H1 (cell line): ENCODE measurements at regions of chr2 and their contacts with region 1.

Region 1: GRCh38 chr2:130372055-130372832 is 16.4 kb downstream of the PTPN18 start:
- DNase-seq: peak in 1 of 2 experiments; percentile 98
- H3K4me3 ChIP-seq: peak overlapping the region; percentile 64 to 88 (median 80)
- H3K27ac ChIP-seq: no peak overlapping the region
- H3K4me1 ChIP-seq: peaks cover 0 to 13% (median 5%) of the 10 kb centered on the region in 4 experiments; a peak in 5 of 7 replicates
- H3K27me3 ChIP-seq: peaks cover 0 to 2% (median 0%) of the 10 kb centered on the region in 4 experiments; a peak in 1 of 7 replicates
- CTCF ChIP-seq: peak; percentile 79 to 87 (median 82)
- EP300 ChIP-seq: peak in 1 of 2 experiments; percentile 2; a peak in 1 of 3 replicates
- POLR2A ChIP-seq: peak in 1 of 2 experiments; percentile 81; a peak in 1 of 3 replicates
- RAD21 ChIP-seq: peak; percentile 42 to 58; a peak in 3 of 4 replicates

Region 2: GRCh38 chr2:130342533-130343275 is 29.5 kb before region 1 on chr2 and contains the start of gene IMP4:
- CTCF ChIA-PET with region 1: interaction called, 10 read pairs
- POLR2A ChIA-PET with region 1: interaction called, 14 read pairs
- DNase-seq: peak; percentile 89 to 94
- H3K4me3 ChIP-seq: peak within 1 kb of the TSS; percentile 77 to 93 (median 84)
- H3K27ac ChIP-seq: peak within 1 kb of the TSS; percentile 84
- H3K4me1 ChIP-seq: peaks cover 0 to 3% (median under 1%) of the 10 kb centered on the region in 4 experiments; a peak in 3 of 7 replicates
- H3K27me3 ChIP-seq: no peaks in the 10 kb centered on the region
- CTCF ChIP-seq: peak; percentile 13 to 32 (median 29)
- EP300 ChIP-seq: no peak
- POLR2A ChIP-seq: peak; percentile 7 to 61; a peak in 1 of 3 replicates
- RAD21 ChIP-seq: peak; percentile 16 to 37; a peak in 2 of 4 replicates
- total RNA-seq, gene IMP4: 93.7 and 96.8 TPM in 2 replicates

Region 3: GRCh38 chr2:130355578-130356431 is 16.4 kb before region 1 on chr2 and contains the start of gene PTPN18:
- CTCF ChIA-PET with region 1: interaction called, 21 read pairs
- POLR2A ChIA-PET with region 1: interaction called, 7 read pairs
- DNase-seq: peak in 1 of 2 experiments; percentile 77
- H3K4me3 ChIP-seq: peak within 1 kb of the TSS; percentile 41 to 65 (median 60)
- H3K27ac ChIP-seq: no peak within 1 kb of the TSS
- H3K4me1 ChIP-seq: no peaks in the 10 kb centered on the region
- H3K27me3 ChIP-seq: peaks cover 15 to 40% (median 26%) of the 10 kb centered on the region in 4 experiments; a peak in 6 of 7 replicates
- CTCF ChIP-seq: peak; percentile 29 to 47 (median 30)
- EP300 ChIP-seq: no peak
- POLR2A ChIP-seq: peak in 1 of 2 experiments; percentile 36; a peak in 1 of 3 replicates
- RAD21 ChIP-seq: peak in 1 of 2 experiments; percentile 47; a peak in 2 of 4 replicates
- total RNA-seq, gene PTPN18: 13.1 and 14.7 TPM in 2 replicates

Region 4: DNA sequence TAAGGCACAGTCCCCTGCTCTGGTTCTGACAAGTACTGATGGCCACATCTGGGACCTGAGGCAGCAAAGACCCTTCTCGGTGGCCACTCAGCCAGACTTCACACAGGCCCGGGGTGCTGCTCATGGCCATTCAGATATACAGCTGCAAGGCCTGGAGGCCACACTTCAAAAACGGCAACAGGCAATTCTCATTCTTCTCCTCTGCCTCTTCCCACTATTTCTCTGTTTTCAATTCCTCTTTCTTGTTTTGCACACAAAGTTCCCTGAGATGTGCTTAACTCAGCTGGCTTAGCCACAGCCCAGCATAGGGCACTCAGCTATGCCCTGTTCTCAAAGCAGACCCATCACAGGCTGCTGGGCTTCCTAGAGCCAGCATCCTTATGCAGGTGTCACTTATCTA is 13.5 kb after region 1 on chr2:
- CTCF ChIA-PET with region 1: interaction called, 34 read pairs
- POLR2A ChIA-PET with region 1: interaction called, 5 read pairs
- DNase-seq: no peak
- H3K4me3 ChIP-seq: no peak overlapping the region
- H3K27ac ChIP-seq: no peak overlapping the region
- H3K4me1 ChIP-seq: peaks cover 0 to under 1% (median 0%) of the 10 kb centered on the region in 4 experiments; a peak in 2 of 7 replicates
- H3K27me3 ChIP-seq: peaks cover 0 to 4% (median 2%) of the 10 kb centered on the region in 4 experiments; a peak in 3 of 7 replicates
- CTCF ChIP-seq: no peak
- EP300 ChIP-seq: no peak
- POLR2A ChIP-seq: no peak
- RAD21 ChIP-seq: no peak

Region 5: GRCh38 chr2:130391058-130391871 is 19.0 kb after region 1 on chr2:
- CTCF ChIA-PET with region 1: interaction called, 34 read pairs
- POLR2A ChIA-PET with region 1: interaction called, 5 read pairs
- DNase-seq: peak in 1 of 2 experiments; percentile 81
- H3K4me3 ChIP-seq: peak overlapping the region; percentile 65 to 76 (median 70)
- H3K27ac ChIP-seq: no peak overlapping the region
- H3K4me1 ChIP-seq: peaks cover 0 to 10% (median 3%) of the 10 kb centered on the region in 4 experiments; a peak in 5 of 7 replicates
- H3K27me3 ChIP-seq: peaks cover 0 to 14% (median 8%) of the 10 kb centered on the region in 4 experiments; a peak in 4 of 7 replicates
- CTCF ChIP-seq: no peak
- EP300 ChIP-seq: no peak
- POLR2A ChIP-seq: no peak
- RAD21 ChIP-seq: no peak